B cell (primary cell): ENCODE measurements at regions of chr2 and their contacts with region 1.

Region 1: GRCh38 chr2:174465327-174465726 is 21.5 kb downstream of the GPR155 start:
- DNase-seq: no peak
- ATAC-seq: no peak
- H3K4me3 ChIP-seq: no peak overlapping the region
- H3K4me3 Mint-ChIP-seq: no peak overlapping the region
- H3K27ac ChIP-seq: no peak overlapping the region
- H3K27ac Mint-ChIP-seq: no peak overlapping the region
- H3K4me1 ChIP-seq: no peaks in the 10 kb centered on the region
- H3K4me1 Mint-ChIP-seq: no peaks in the 10 kb centered on the region
- H3K27me3 ChIP-seq: no peaks in the 10 kb centered on the region
- H3K27me3 Mint-ChIP-seq: no peaks in the 10 kb centered on the region
- CTCF ChIP-seq: no peak

Region 2: GRCh38 chr2:174403628-174404027 is 61.7 kb before region 1 on chr2:
- CTCF ChIA-PET with region 1: no interaction called
- POLR2A ChIA-PET with region 1: no interaction called
- intact Hi-C with region 1: no loop called
- DNase-seq: no peak
- ATAC-seq: no peak
- H3K4me3 ChIP-seq: no peak overlapping the region
- H3K4me3 Mint-ChIP-seq: no peak overlapping the region
- H3K27ac ChIP-seq: no peak overlapping the region
- H3K27ac Mint-ChIP-seq: no peak overlapping the region
- H3K4me1 ChIP-seq: no peaks in the 10 kb centered on the region
- H3K4me1 Mint-ChIP-seq: no peaks in the 10 kb centered on the region
- H3K27me3 ChIP-seq: no peaks in the 10 kb centered on the region
- H3K27me3 Mint-ChIP-seq: no peaks in the 10 kb centered on the region
- CTCF ChIP-seq: no peak

Region 3: GRCh38 chr2:174492963-174493431 is 27.7 kb after region 1 on chr2:
- CTCF ChIA-PET with region 1: interaction called, 53 read pairs
- POLR2A ChIA-PET with region 1: interaction called, 5 read pairs
- intact Hi-C with region 1: no loop called
- DNase-seq: peak; percentile 89
- ATAC-seq: peak; percentile 95
- H3K4me3 ChIP-seq: peak overlapping the region in 3 of 5 experiments; percentile 34 to 50 (median 37)
- H3K4me3 Mint-ChIP-seq: peak overlapping the region; percentile 84
- H3K27ac ChIP-seq: peak overlapping the region; percentile 82 to 94
- H3K27ac Mint-ChIP-seq: peak overlapping the region; percentile 94
- H3K4me1 ChIP-seq: peaks cover 30 to 32% of the 10 kb centered on the region in 2 donors
- H3K4me1 Mint-ChIP-seq: peaks cover 51% of the 10 kb centered on the region
- H3K27me3 ChIP-seq: no peaks in the 10 kb centered on the region
- H3K27me3 Mint-ChIP-seq: no peaks in the 10 kb centered on the region
- CTCF ChIP-seq: no peak

Region 4: DNA sequence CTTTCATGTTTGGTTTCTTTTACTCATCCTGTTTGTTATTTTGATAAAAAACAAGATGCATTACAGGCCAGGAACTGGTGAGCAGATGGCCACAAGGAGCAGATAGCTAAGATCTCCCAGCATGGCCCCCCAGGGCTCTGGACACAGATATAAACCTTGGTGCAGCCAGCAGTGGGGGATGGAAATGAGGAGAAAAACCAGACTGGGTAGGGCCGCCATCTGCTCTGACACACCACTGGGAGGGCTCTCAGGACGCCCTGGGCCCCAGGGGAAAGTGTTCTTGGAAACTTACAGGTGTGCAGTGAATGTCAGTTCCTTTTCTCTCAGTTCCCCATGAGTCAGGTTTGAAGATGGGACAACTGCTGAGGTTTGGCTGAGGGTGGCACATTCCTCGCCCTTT is 71.0 kb after region 1 on chr2:
- CTCF ChIA-PET with region 1: interaction called, 18 read pairs
- POLR2A ChIA-PET with region 1: no interaction called
- intact Hi-C with region 1: no loop called
- DNase-seq: no peak
- ATAC-seq: no peak
- H3K4me3 ChIP-seq: no peak overlapping the region
- H3K4me3 Mint-ChIP-seq: no peak overlapping the region
- H3K27ac ChIP-seq: no peak overlapping the region
- H3K27ac Mint-ChIP-seq: no peak overlapping the region
- H3K4me1 ChIP-seq: no peaks in the 10 kb centered on the region
- H3K4me1 Mint-ChIP-seq: no peaks in the 10 kb centered on the region
- H3K27me3 ChIP-seq: no peaks in the 10 kb centered on the region
- H3K27me3 Mint-ChIP-seq: peaks cover 16% of the 10 kb centered on the region
- CTCF ChIP-seq: no peak

Region 5: GRCh38 chr2:174561283-174561971 is 96.1 kb after region 1 on chr2:
- CTCF ChIA-PET with region 1: interaction called, 29 read pairs
- POLR2A ChIA-PET with region 1: no interaction called
- intact Hi-C with region 1: no loop called
- DNase-seq: no peak
- ATAC-seq: no peak
- H3K4me3 ChIP-seq: no peak overlapping the region
- H3K4me3 Mint-ChIP-seq: no peak overlapping the region
- H3K27ac ChIP-seq: peak overlapping the region in 1 of 2 donors; percentile 53
- H3K27ac Mint-ChIP-seq: no peak overlapping the region
- H3K4me1 ChIP-seq: no peaks in the 10 kb centered on the region
- H3K4me1 Mint-ChIP-seq: no peaks in the 10 kb centered on the region
- H3K27me3 ChIP-seq: no peaks in the 10 kb centered on the region
- H3K27me3 Mint-ChIP-seq: no peaks in the 10 kb centered on the region
- CTCF ChIP-seq: no peak

Region 6: GRCh38 chr2:174603280-174603679 is 138.0 kb after region 1 on chr2:
- CTCF ChIA-PET with region 1: interaction called, 48 read pairs
- POLR2A ChIA-PET with region 1: no interaction called
- intact Hi-C with region 1: loop called (anchors 1 kb)
- DNase-seq: peak; percentile 69
- ATAC-seq: no peak
- H3K4me3 ChIP-seq: no peak overlapping the region
- H3K4me3 Mint-ChIP-seq: no peak overlapping the region
- H3K27ac ChIP-seq: peak overlapping the region in 1 of 2 donors; percentile 8
- H3K27ac Mint-ChIP-seq: peak overlapping the region; percentile 71
- H3K4me1 ChIP-seq: peaks cover 69 to 74% of the 10 kb centered on the region in 2 donors
- H3K4me1 Mint-ChIP-seq: peaks cover 86% of the 10 kb centered on the region
- H3K27me3 ChIP-seq: no peaks in the 10 kb centered on the region
- H3K27me3 Mint-ChIP-seq: no peaks in the 10 kb centered on the region
- CTCF ChIP-seq: peak; percentile 71

Region 7: DNA sequence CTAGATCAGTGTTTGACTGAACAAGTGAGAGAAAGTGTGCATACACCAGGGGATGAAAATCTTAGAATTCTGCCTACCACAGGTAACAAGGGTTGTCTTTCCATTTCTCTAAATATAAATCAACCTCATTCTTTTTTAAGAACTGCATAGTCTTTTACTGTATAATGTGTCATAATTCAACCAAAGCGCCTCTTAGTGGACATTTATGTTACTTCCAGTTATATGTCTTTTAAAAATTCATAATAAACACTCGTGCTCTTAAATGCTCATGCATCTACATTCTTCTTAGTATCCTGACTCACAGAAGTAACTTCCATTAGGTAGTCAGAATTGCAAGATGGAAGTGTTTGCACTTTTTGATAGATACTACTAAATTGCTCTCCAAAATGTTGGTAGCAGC is 222.8 kb after region 1 on chr2:
- CTCF ChIA-PET with region 1: interaction called, 194 read pairs
- POLR2A ChIA-PET with region 1: interaction called, 3 read pairs
- intact Hi-C with region 1: loop called (anchors 1 kb)
- DNase-seq: peak; percentile 65
- ATAC-seq: peak; percentile 42
- H3K4me3 ChIP-seq: no peak overlapping the region
- H3K4me3 Mint-ChIP-seq: no peak overlapping the region
- H3K27ac ChIP-seq: no peak overlapping the region
- H3K27ac Mint-ChIP-seq: no peak overlapping the region
- H3K4me1 ChIP-seq: peaks cover 7 to 8% of the 10 kb centered on the region in 2 donors
- H3K4me1 Mint-ChIP-seq: peaks cover 9% of the 10 kb centered on the region
- H3K27me3 ChIP-seq: peaks cover 0 to 14% (median 0%) of the 10 kb centered on the region in 4 experiments
- H3K27me3 Mint-ChIP-seq: peaks cover 3% of the 10 kb centered on the region
- CTCF ChIP-seq: peak; percentile 76

Region 8: GRCh38 chr2:175126661-175127060 is 661.3 kb after region 1 on chr2:
- CTCF ChIA-PET with region 1: no interaction called
- POLR2A ChIA-PET with region 1: no interaction called
- intact Hi-C with region 1: no loop called
- DNase-seq: no peak
- ATAC-seq: no peak
- H3K4me3 ChIP-seq: no peak overlapping the region
- H3K4me3 Mint-ChIP-seq: no peak overlapping the region
- H3K27ac ChIP-seq: no peak overlapping the region
- H3K27ac Mint-ChIP-seq: no peak overlapping the region
- H3K4me1 ChIP-seq: no peaks in the 10 kb centered on the region
- H3K4me1 Mint-ChIP-seq: peaks cover 2% of the 10 kb centered on the region
- H3K27me3 ChIP-seq: no peaks in the 10 kb centered on the region
- H3K27me3 Mint-ChIP-seq: no peaks in the 10 kb centered on the region
- CTCF ChIP-seq: no peak